GM13977 (cell line): ENCODE measurements at regions of chr4 and their contacts with region 1.

Region 1: DNA sequence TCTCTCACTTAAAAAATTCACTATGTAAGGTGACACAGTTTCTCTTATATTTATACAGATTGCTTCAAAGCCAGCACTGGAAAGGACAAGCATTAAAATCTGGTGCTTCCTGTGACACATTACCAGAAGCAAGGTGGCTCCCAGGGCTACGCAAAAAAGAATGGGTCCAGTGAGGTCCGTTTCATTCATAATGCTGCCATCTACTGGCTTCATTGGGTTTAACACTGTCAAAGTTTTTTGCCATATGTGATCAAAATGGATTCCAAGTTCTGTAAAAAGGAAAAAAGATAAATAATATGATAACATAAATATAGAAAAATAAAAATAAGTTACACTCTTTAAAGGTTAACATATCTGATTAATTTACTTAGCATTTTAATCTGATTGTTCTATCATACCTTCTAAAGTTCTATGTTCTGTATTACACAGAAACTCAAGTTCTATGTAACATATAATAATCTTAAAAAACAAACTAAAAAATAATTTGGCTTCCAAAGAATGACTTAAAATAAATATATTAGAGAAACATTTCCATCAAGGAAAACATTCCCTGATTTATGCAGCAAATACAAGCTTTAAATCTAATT is 22.1 kb downstream of the YIPF7 start:
- DNase-seq: peak; percentile 54
- CTCF ChIP-seq: peak; percentile 66

Region 2: GRCh38 chr4:43132010-43132582 is 1497.3 kb before region 1 on chr4:
- in situ Hi-C with region 1: loop called (anchors 25 kb)
- DNase-seq: peak; percentile 42
- CTCF ChIP-seq: peak; percentile 91

Region 3: GRCh38 chr4:44237643-44238042 is 391.7 kb before region 1 on chr4:
- in situ Hi-C with region 1: no loop called
- DNase-seq: no peak
- CTCF ChIP-seq: no peak

Region 4: DNA sequence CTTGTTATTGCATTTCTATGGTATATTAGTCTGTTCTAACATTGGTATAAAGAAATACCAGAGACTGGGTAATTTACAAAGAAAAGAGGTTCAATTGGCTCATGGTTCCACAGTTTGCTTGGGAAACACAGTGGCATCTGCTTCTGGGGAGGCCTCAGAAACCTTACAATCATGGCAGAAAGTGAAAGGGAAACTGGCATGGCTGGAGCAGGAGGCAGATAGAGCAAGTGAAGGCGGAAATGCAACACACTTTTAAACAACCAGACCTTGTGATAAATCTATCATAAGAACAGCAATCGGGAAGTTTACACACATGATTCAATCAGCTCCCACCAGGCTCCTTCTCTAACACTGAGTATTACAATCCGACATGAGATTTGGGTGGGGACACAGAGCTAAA is 443.6 kb after region 1 on chr4:
- in situ Hi-C with region 1: no loop called
- DNase-seq: no peak
- CTCF ChIP-seq: no peak